Activated B cell treated with CpG ODN at 0.5 μM for 24 hours (primary cell): ENCODE measurements at regions of chr2 and their contacts with region 1.

Region 1: DNA sequence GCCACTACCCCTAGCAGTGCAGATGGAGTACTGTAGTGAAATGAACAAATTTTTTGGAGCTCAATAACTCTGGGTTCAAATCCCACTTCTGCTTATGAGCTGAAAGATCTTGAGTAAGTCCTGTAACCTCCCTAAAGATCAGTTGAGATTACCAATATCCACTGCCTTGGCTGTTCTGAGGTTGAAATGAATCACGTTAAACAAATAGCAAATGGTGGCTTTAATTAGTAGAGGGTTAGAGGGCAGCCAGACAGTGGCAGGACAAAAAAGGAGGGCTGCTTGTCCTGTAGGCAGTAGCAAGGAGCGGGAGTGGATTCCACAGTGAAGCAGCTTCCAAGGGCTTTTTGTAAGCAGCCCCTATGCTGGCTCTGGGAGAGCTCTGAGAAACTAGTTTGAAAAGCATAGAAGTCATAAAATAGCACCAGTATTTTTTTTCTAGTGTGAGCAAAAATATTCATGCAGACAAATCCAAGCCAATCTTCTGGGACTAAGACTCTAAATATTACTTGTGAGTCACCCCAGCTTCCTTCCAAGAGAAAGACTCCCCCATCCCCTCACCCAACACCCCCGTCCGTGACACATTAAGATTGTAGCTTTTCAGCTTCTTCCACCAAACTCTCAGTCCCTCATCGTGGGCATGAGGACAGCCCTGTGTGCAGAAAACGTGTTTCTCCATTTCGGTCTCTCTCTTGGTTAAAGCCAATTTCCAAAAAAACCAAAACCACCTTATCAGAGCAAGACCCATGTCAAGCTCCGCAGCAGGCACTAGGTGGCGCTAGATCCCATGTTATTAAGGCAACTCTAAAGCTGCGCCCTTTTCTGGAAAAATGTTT is 123.5 kb upstream of the LGALSL start:
- DNase-seq: peak; percentile 41
- ATAC-seq: no peak
- H3K4me3 Mint-ChIP-seq: peak overlapping the region; percentile 55
- H3K27ac Mint-ChIP-seq: peak overlapping the region; percentile 10
- H3K4me1 Mint-ChIP-seq: peaks cover 47% of the 10 kb centered on the region
- H3K27me3 Mint-ChIP-seq: no peaks in the 10 kb centered on the region
- CTCF ChIP-seq: peak; percentile 45

Region 2: GRCh38 chr2:63861220-63861822 is 469.2 kb before region 1 on chr2:
- CTCF ChIA-PET with region 1: interaction called, 10 read pairs
- POLR2A ChIA-PET with region 1: no interaction called
- intact Hi-C with region 1: no loop called
- DNase-seq: no peak
- ATAC-seq: peak; percentile 70
- H3K4me3 Mint-ChIP-seq: no peak overlapping the region
- H3K27ac Mint-ChIP-seq: no peak overlapping the region
- H3K4me1 Mint-ChIP-seq: peaks cover 8% of the 10 kb centered on the region
- H3K27me3 Mint-ChIP-seq: no peaks in the 10 kb centered on the region
- CTCF ChIP-seq: no peak

Region 3: DNA sequence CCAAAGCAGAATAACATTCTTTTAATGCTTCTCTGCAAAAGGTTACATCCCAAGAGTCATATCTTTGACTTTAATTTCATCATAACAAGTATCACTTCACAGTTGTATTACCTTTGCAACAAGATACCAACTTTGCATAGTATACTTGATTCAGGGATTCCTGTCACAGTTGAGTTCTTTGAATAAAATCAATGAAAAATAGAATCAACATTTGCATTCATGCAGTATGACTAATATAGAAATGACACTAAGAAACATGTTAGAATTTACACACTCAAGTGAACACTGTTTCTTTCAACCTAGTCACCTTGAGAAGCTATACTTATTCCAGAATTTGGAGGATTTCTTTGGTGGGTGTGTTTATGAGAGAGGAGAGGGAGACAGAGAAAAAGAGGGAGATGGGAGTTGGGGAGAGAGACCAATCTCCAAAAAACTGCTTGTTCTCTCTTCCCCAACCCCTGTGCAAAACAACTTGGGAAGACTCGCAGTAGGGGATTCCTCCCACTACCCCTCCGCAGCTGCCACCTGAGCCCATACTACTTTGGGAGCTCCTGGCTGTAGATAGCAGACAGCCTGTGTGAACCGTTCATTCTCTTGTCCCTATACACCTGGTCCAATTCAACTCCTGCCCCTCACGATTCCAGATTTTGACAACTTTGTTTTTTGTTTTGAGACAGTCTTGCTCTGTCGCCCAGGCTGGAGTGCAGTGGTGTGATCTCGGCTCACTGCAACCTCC is 244.0 kb before region 1 on chr2:
- CTCF ChIA-PET with region 1: interaction called, 9 read pairs
- POLR2A ChIA-PET with region 1: interaction called, 29 read pairs
- intact Hi-C with region 1: no loop called
- DNase-seq: no peak
- ATAC-seq: peak; percentile 61
- H3K4me3 Mint-ChIP-seq: peak overlapping the region; percentile 58
- H3K27ac Mint-ChIP-seq: peak overlapping the region; percentile 84
- H3K4me1 Mint-ChIP-seq: peaks cover 68% of the 10 kb centered on the region
- H3K27me3 Mint-ChIP-seq: no peaks in the 10 kb centered on the region
- CTCF ChIP-seq: no peak

Region 4: DNA sequence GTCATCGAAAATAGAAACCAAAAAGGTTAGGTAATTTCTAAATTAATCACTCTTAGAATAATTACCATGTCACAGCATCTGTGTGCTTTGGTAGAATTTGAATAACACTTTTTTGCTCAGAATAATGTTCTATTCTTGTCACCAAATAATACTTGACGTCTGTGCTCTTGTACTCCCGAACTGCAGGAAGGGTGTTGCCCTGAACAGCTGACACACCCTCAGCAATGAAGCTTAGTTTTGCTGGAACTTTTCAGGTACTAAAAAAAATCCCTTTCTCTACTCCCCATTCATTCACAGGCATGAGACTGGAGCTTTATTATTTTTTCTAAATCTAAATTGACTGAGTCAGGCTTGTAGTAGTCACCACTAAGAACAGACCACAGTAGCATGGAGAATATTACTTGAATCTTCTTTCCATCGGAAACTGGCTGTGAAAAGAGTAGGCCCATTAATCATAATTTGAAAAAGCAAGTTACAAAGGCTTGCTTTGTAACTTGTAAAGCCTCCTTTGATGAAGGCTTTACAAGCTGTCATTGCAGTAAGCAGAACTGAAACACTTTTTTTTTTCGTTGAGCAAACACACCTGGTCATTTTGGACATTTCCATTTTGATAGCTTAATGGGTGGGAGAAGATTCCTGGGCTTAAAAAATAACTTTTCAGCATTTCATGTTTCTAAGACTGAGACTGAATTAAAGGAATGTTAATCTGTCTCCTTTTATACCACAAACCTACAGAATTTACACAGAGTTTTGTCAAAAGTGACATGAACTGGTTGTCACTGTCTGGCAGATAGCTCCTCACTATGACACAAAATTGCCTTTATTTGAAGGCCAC is 116.0 kb before region 1 on chr2:
- CTCF ChIA-PET with region 1: interaction called, 21 read pairs
- POLR2A ChIA-PET with region 1: interaction called, 86 read pairs
- intact Hi-C with region 1: loop called (anchors 1 kb)
- DNase-seq: no peak
- ATAC-seq: peak; percentile 64
- H3K4me3 Mint-ChIP-seq: peak overlapping the region; percentile 75
- H3K27ac Mint-ChIP-seq: peak overlapping the region; percentile 99
- H3K4me1 Mint-ChIP-seq: peaks cover 76% of the 10 kb centered on the region
- H3K27me3 Mint-ChIP-seq: no peaks in the 10 kb centered on the region
- CTCF ChIP-seq: no peak

Region 5: GRCh38 chr2:64318476-64318748 is 12.1 kb before region 1 on chr2:
- CTCF ChIA-PET with region 1: interaction called, 27 read pairs
- POLR2A ChIA-PET with region 1: interaction called, 5 read pairs
- intact Hi-C with region 1: no loop called
- DNase-seq: no peak
- ATAC-seq: no peak
- H3K4me3 Mint-ChIP-seq: no peak overlapping the region
- H3K27ac Mint-ChIP-seq: no peak overlapping the region
- H3K4me1 Mint-ChIP-seq: peaks cover 7% of the 10 kb centered on the region
- H3K27me3 Mint-ChIP-seq: no peaks in the 10 kb centered on the region
- CTCF ChIP-seq: no peak

Region 6: GRCh38 chr2:64865073-64865830 is 534.8 kb after region 1 on chr2:
- CTCF ChIA-PET with region 1: interaction called, 9 read pairs
- POLR2A ChIA-PET with region 1: no interaction called
- intact Hi-C with region 1: loop called (anchors 2 kb)
- DNase-seq: peak; percentile 76
- ATAC-seq: peak; percentile 56
- H3K4me3 Mint-ChIP-seq: peak overlapping the region; percentile 41
- H3K27ac Mint-ChIP-seq: no peak overlapping the region
- H3K4me1 Mint-ChIP-seq: peaks cover 6% of the 10 kb centered on the region
- H3K27me3 Mint-ChIP-seq: no peaks in the 10 kb centered on the region
- CTCF ChIP-seq: no peak